Activated T-helper 2 cell treated with anti-CD3 and anti-CD28 coated beads, Interferon-gamma antibody, Interleukin-2, Interleukin-4, amounts not matched to agents 10 μg/mL and 5 μg/mL and 100 μg/mL, durations not matched to agents 14 hours and 24 hours and 36 hours (primary cell): ENCODE measurements at regions of chr1 and their contacts with region 1.

Region 1: GRCh38 chr1:205775015-205775716 is at the start of gene RAB29:
- DNase-seq: peak; percentile 81
- H3K4me3 Mint-ChIP-seq: peak within 1 kb of the TSS; percentile 96
- H3K27ac Mint-ChIP-seq: peak within 1 kb of the TSS; percentile 93
- H3K4me1 Mint-ChIP-seq: peaks cover 51% of the 10 kb centered on the region
- H3K27me3 Mint-ChIP-seq: peaks cover 4% of the 10 kb centered on the region
- total RNA-seq, gene RAB29: 26.2 and 26.7 TPM in 2 replicates

Region 2: GRCh38 chr1:205645519-205645918 is 129.6 kb before region 1 on chr1:
- intact Hi-C with region 1: no loop called
- DNase-seq: no peak
- H3K4me3 Mint-ChIP-seq: no peak overlapping the region
- H3K27ac Mint-ChIP-seq: no peak overlapping the region
- H3K4me1 Mint-ChIP-seq: no peaks in the 10 kb centered on the region
- H3K27me3 Mint-ChIP-seq: peaks cover 4% of the 10 kb centered on the region

Region 3: GRCh38 chr1:205711104-205712020 is 63.8 kb before region 1 on chr1:
- intact Hi-C with region 1: loop called (anchors 2 kb)
- DNase-seq: peak; percentile 48
- H3K4me3 Mint-ChIP-seq: no peak overlapping the region
- H3K27ac Mint-ChIP-seq: peak overlapping the region; percentile 77
- H3K4me1 Mint-ChIP-seq: peaks cover 19% of the 10 kb centered on the region
- H3K27me3 Mint-ChIP-seq: no peaks in the 10 kb centered on the region

Region 4: GRCh38 chr1:205719762-205720161 is 55.4 kb before region 1 on chr1:
- intact Hi-C with region 1: loop called (anchors 2 kb)
- DNase-seq: no peak
- H3K4me3 Mint-ChIP-seq: peak overlapping the region; percentile 3
- H3K27ac Mint-ChIP-seq: peak overlapping the region; percentile 89
- H3K4me1 Mint-ChIP-seq: peaks cover 32% of the 10 kb centered on the region
- H3K27me3 Mint-ChIP-seq: no peaks in the 10 kb centered on the region

Region 5: DNA sequence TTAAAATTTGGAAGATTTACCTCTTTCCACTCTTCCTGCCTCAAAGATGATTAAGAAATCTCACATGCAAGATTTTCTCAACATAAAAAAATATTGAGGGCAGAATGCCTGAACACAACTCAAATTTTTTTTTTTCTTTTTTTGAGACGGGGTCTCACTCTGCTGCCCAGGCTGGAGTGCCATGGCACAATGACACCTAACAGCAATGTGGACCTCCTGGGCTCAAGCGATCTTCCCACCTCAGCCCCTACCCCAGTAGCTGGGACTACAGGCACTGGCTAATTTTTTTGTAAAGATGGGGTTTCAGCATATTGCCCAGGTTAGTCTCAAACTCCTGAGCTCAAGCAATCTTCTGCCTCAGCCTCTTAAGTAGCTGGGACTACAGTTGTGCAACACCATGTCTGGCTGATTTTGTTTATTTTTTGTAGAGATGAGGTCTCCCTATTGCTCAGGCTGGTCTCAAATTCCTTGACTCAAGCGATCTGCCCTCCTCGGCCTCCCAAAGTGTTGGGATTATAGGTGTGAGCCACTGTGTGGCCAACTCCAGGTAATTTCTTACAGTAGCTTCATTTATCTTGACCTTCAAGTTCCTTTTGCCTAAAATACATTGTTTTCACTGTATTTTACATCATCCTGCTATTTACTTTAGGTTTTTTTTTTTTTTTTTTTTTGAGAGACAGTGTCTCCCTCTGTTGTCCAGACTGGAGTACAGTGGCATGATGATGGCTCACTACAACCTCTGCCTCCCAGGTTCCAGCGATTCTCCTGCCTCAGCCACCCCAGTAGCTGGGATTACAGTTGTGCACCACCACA is 35.6 kb before region 1 on chr1:
- intact Hi-C with region 1: no loop called
- DNase-seq: no peak
- H3K4me3 Mint-ChIP-seq: no peak overlapping the region
- H3K27ac Mint-ChIP-seq: peak overlapping the region; percentile 35
- H3K4me1 Mint-ChIP-seq: peaks cover 27% of the 10 kb centered on the region
- H3K27me3 Mint-ChIP-seq: no peaks in the 10 kb centered on the region

Region 6: DNA sequence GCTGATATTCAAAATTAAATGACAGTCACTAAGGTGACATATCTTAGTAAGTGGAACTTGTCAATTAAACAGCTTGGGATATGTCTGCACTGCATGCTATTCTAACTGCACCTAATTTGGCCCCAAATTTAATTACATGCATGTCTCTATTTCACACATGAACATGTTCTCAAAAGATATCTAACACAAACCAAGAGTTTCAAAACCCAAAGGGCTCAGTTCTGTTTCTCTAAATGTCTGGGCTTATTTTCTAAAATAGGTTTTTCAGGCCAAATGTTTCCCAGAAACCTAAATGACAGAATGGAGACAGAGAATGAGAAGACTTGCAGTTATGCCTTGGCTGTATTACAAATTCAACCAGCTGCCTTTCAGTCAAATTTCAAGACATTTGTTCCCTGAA is 11.2 kb before region 1 on chr1:
- intact Hi-C with region 1: no loop called
- DNase-seq: no peak
- H3K4me3 Mint-ChIP-seq: no peak overlapping the region
- H3K27ac Mint-ChIP-seq: no peak overlapping the region
- H3K4me1 Mint-ChIP-seq: peaks cover 8% of the 10 kb centered on the region
- H3K27me3 Mint-ChIP-seq: no peaks in the 10 kb centered on the region